Heart left ventricle (tissue), 16 donors: ENCODE measurements at regions of chrX and their contacts with region 1.

Region 1: GRCh38 chrX:13495232-13495631 is 74.2 kb upstream of the EGFL6 start:
- DNase-seq: no peak
- ATAC-seq: no peak
- H3K4me3 ChIP-seq: no peak overlapping the region
- H3K27ac ChIP-seq: no peak overlapping the region
- H3K4me1 ChIP-seq: no peaks in the 10 kb centered on the region
- H3K27me3 ChIP-seq: peaks cover 0 to 40% (median 0%) of the 10 kb centered on the region in 9 donors
- CTCF ChIP-seq: no peak
- POLR2A ChIP-seq: no peak

Region 2: GRCh38 chrX:12804655-12805054 is 690.6 kb before region 1 on chrX:
- intact Hi-C with region 1: loop called in 1 of 10 experiments (anchors 10 kb)
- DNase-seq: no peak
- ATAC-seq: no peak
- H3K4me3 ChIP-seq: no peak overlapping the region
- H3K27ac ChIP-seq: no peak overlapping the region
- H3K4me1 ChIP-seq: no peaks in the 10 kb centered on the region
- H3K27me3 ChIP-seq: peaks cover 0 to 7% (median 0%) of the 10 kb centered on the region in 9 donors
- CTCF ChIP-seq: no peak
- POLR2A ChIP-seq: no peak

Region 3: GRCh38 chrX:13607996-13608365 is 112.7 kb after region 1 on chrX:
- intact Hi-C with region 1: no loop called
- DNase-seq: no peak
- ATAC-seq: no peak
- H3K4me3 ChIP-seq: no peak overlapping the region
- H3K27ac ChIP-seq: no peak overlapping the region
- H3K4me1 ChIP-seq: no peaks in the 10 kb centered on the region
- H3K27me3 ChIP-seq: peaks cover 0 to 15% (median 0%) of the 10 kb centered on the region in 9 donors
- CTCF ChIP-seq: no peak
- POLR2A ChIP-seq: no peak